Activated CD8-positive, alpha-beta memory T cell treated with anti-CD3 and anti-CD28 coated beads, Interleukin-2, amount 10 ng/mL, durations not matched to agents 7 days and 5 days (primary cell): ENCODE measurements at regions of chr15 and their contacts with region 1.

Region 1: GRCh38 chr15:31442203-31443111 is 115.8 kb downstream of the KLF13 start:
- DNase-seq: no peak
- ATAC-seq: no peak
- H3K4me3 Mint-ChIP-seq: peak overlapping the region; percentile 5
- H3K27ac Mint-ChIP-seq: peak overlapping the region; percentile 29
- H3K4me1 Mint-ChIP-seq: peaks cover 62% of the 10 kb centered on the region
- H3K27me3 Mint-ChIP-seq: no peaks in the 10 kb centered on the region

Region 2: DNA sequence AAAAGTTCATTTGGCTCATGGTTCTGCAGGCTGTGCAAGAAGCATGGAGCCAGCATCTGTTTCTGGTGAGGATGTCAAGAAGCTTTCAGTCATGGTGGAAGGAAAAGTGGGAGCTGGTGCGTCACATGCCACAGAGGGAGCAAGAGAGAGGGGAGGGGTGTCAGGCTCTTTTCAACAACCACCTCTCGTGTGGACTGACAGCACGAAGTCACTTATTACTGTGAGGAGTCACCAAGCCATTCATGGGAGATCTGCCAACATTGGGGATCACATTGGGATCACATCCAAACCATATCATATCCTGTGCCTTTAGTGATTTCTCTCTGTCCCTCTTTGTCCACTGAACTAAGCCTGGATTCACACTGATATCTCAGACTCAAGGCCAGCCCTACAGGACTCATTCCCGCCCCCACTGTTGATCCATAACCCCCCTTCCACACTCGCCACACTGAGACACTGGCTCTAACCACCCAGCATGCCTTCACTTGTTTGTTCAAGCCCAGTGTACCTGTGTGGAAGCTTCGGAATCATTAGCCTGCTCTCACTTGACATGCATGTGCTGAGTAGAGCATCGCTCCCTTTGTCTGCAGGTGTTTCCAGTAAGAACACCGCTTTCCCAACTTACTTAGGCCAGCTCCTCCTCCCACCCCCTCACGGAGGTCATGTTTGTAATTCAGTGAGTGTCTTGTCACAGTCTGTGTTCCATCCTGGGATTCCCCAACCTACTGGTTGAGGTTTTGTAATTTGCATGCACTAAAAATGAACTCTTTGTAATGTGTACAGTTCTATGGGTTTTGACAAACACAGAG is 16.3 kb after region 1 on chr15:
- CTCF ChIA-PET with region 1: interaction called, 10 read pairs
- DNase-seq: no peak
- ATAC-seq: peak; percentile 33
- H3K4me3 Mint-ChIP-seq: no peak overlapping the region
- H3K27ac Mint-ChIP-seq: no peak overlapping the region
- H3K4me1 Mint-ChIP-seq: peaks cover 25% of the 10 kb centered on the region
- H3K27me3 Mint-ChIP-seq: no peaks in the 10 kb centered on the region

Region 3: GRCh38 chr15:31483053-31483985 is 40.9 kb after region 1 on chr15:
- CTCF ChIA-PET with region 1: interaction called, 272 read pairs
- DNase-seq: peak; percentile 79
- ATAC-seq: peak; percentile 72
- H3K4me3 Mint-ChIP-seq: peak overlapping the region; percentile 89
- H3K27ac Mint-ChIP-seq: peak overlapping the region; percentile 96
- H3K4me1 Mint-ChIP-seq: peaks cover 71% of the 10 kb centered on the region
- H3K27me3 Mint-ChIP-seq: no peaks in the 10 kb centered on the region